ENCODE measurements at regions of chr4 and their contacts with region 1.

Region 1: GRCh38 chr4:69617083-69617694 is 22.3 kb downstream of the UGT2A2 start:
- DNase-seq: no peak
- ATAC-seq: peak; percentile 50; the same call in 2 of the 3 replicates
- H3K4me3 ChIP-seq: no peak overlapping the region
- H3K27ac ChIP-seq: no peak overlapping the region
- H3K4me1 ChIP-seq: no peaks in the 10 kb centered on the region
- H3K27me3 ChIP-seq: no peaks in the 10 kb centered on the region
- CTCF ChIP-seq: peak; percentile 30 to 46 (median 31); a peak in 4 of 6 replicates
- EP300 ChIP-seq: no peak
- POLR2A ChIP-seq: no peak
- RAD21 ChIP-seq: peak; percentile 70

Region 2: DNA sequence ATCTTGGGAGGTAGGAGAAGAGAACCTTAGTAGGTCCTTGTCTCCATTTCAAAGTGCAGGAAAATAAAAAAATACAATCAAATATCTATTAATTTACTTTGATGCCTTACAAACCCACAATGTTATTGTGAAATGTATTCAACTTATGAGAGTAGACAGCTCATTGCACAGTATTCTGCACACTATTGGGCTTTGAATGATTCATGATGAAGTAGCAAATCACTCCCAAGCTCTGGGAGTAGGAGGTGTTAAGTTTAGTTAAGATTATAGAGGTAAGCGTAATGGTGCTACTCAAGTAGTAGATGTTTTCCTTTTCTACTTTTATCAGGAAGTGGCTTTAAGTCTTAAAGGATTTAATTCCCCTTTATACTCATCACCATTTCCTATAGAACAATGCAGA is 1621.1 kb before region 1 on chr4:
- CTCF ChIA-PET with region 1: no interaction called
- POLR2A ChIA-PET with region 1: no interaction called
- RAD21 ChIA-PET with region 1: no interaction called
- SMC1A ChIA-PET with region 1: no interaction called
- in situ Hi-C with region 1: no loop called
- intact Hi-C with region 1: loop called (anchors 10 kb)
- DNase-seq: no peak
- ATAC-seq: no peak
- H3K4me3 ChIP-seq: no peak overlapping the region
- H3K27ac ChIP-seq: no peak overlapping the region
- H3K4me1 ChIP-seq: no peaks in the 10 kb centered on the region
- H3K27me3 ChIP-seq: no peaks in the 10 kb centered on the region
- CTCF ChIP-seq: no peak
- EP300 ChIP-seq: no peak
- POLR2A ChIP-seq: no peak
- RAD21 ChIP-seq: no peak

Region 3: DNA sequence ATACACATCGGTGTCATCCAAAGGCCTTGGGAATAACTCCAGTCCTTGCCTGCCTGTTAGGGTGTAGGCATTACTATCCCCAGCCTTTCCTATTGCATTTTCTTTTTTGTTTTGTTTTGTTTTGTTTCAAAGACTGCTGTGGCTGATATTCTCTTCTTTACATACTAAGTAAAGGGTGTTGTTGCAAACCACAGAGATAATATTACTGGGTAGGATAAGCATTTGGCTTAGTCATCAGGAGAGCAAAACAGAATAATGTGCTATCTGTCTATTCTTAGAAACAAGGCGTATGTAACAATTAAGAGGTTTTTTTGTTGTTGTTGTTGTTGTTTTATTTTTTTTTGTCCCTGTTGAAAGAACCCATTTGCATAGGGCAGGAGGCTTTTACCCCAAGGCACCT is 295.1 kb before region 1 on chr4:
- CTCF ChIA-PET with region 1: interaction called, 3 read pairs
- POLR2A ChIA-PET with region 1: no interaction called
- RAD21 ChIA-PET with region 1: no interaction called
- SMC1A ChIA-PET with region 1: interaction called, 3 read pairs
- in situ Hi-C with region 1: loop called (anchors 25 kb)
- intact Hi-C with region 1: loop called (anchors 5 kb)
- DNase-seq: no peak
- ATAC-seq: no peak
- H3K4me3 ChIP-seq: no peak overlapping the region
- H3K27ac ChIP-seq: no peak overlapping the region
- H3K4me1 ChIP-seq: no peaks in the 10 kb centered on the region
- H3K27me3 ChIP-seq: no peaks in the 10 kb centered on the region
- CTCF ChIP-seq: no peak
- EP300 ChIP-seq: no peak
- POLR2A ChIP-seq: no peak
- RAD21 ChIP-seq: no peak

Region 4: DNA sequence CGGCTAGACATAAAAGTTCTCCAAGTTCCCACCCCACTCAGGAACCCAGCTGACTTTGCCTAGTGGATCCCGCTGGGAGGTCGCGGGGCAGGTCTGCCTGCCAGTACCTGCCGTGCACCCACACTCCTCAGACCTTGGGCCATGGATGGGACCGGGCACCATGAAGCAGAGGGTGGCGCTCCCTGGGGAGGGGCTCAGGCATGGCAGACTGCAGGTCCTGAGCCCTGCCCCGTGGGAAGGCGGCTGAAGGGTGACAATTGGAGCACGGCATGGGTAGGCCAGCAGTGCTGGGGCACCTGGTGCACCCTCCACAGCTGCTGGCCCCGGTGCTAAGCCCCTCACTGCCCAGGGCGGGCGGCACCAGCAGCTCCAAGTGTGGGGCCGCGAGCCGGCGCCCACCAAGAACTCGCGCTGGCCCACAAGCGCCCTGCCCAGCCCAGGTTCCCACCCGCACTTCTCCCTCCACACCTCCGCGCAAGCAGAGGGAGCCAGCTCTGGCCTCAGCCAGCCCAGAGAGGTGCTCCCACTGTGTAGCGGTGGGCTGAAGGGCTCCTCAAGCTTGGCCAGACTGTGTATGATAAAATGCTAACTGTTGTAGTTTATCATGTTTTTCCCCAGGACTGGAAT is 40.8 kb before region 1 on chr4:
- CTCF ChIA-PET with region 1: no interaction called
- POLR2A ChIA-PET with region 1: no interaction called
- RAD21 ChIA-PET with region 1: no interaction called
- SMC1A ChIA-PET with region 1: no interaction called
- in situ Hi-C with region 1: no loop called
- intact Hi-C with region 1: no loop called
- DNase-seq: no peak
- ATAC-seq: no peak
- H3K4me3 ChIP-seq: no peak overlapping the region
- H3K27ac ChIP-seq: no peak overlapping the region
- H3K4me1 ChIP-seq: no peaks in the 10 kb centered on the region
- H3K27me3 ChIP-seq: no peaks in the 10 kb centered on the region
- CTCF ChIP-seq: no peak
- EP300 ChIP-seq: no peak
- POLR2A ChIP-seq: no peak
- RAD21 ChIP-seq: no peak

Measured in GM12878 (cell line).